Activated CD8-positive, alpha-beta T cell treated with anti-CD3 and anti-CD28 coated beads, Interleukin-2, amount 10 ng/mL, durations not matched to agents 7 days and 5 days (primary cell): ENCODE measurements at regions of chr1 and their contacts with region 1.

Region 1: DNA sequence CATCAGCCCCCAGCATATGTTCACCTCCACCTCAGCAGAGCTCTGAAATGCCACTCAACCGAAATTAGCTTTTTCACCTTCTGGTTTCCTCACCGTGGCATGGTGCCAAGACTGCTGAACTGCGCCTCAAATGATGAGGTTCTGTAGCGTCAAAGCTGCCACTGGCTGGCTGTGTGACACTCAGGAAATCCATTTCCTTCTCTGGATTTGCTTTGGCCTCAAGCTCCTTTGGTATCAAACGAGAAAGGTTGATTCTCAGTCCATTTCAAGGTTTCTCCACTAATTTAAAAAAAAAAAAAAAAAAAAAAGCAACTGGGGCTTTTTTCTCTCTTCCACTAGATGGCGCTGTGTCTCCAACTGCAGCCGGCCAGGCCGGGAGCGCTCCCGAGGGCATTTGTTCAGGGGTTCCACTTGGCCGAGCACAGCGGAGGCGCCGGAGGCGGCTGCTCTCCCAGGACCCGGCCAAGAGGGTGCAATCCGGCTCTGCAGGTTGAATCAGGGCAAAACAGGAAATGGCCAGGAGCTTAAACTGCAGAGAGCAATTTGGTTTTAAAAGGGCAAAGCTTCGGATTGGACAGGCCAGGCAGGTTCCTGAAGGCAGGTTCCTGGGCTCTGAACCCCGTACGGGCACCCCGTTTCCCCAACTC is 26.5 kb upstream of the PLA2G2C start:
- DNase-seq: peak; percentile 53
- ATAC-seq: peak; percentile 73
- H3K4me3 Mint-ChIP-seq: no peak overlapping the region
- H3K27ac Mint-ChIP-seq: no peak overlapping the region
- H3K4me1 Mint-ChIP-seq: peaks cover 6% of the 10 kb centered on the region
- H3K27me3 Mint-ChIP-seq: peaks cover 30% of the 10 kb centered on the region

Region 2: GRCh38 chr1:20178634-20179370 is 34.0 kb before region 1 on chr1:
- CTCF ChIA-PET with region 1: interaction called, 10 read pairs
- POLR2A ChIA-PET with region 1: no interaction called
- DNase-seq: no peak
- ATAC-seq: no peak
- H3K4me3 Mint-ChIP-seq: no peak overlapping the region
- H3K27ac Mint-ChIP-seq: no peak overlapping the region
- H3K4me1 Mint-ChIP-seq: peaks cover 14% of the 10 kb centered on the region
- H3K27me3 Mint-ChIP-seq: peaks cover 21% of the 10 kb centered on the region

Region 3: DNA sequence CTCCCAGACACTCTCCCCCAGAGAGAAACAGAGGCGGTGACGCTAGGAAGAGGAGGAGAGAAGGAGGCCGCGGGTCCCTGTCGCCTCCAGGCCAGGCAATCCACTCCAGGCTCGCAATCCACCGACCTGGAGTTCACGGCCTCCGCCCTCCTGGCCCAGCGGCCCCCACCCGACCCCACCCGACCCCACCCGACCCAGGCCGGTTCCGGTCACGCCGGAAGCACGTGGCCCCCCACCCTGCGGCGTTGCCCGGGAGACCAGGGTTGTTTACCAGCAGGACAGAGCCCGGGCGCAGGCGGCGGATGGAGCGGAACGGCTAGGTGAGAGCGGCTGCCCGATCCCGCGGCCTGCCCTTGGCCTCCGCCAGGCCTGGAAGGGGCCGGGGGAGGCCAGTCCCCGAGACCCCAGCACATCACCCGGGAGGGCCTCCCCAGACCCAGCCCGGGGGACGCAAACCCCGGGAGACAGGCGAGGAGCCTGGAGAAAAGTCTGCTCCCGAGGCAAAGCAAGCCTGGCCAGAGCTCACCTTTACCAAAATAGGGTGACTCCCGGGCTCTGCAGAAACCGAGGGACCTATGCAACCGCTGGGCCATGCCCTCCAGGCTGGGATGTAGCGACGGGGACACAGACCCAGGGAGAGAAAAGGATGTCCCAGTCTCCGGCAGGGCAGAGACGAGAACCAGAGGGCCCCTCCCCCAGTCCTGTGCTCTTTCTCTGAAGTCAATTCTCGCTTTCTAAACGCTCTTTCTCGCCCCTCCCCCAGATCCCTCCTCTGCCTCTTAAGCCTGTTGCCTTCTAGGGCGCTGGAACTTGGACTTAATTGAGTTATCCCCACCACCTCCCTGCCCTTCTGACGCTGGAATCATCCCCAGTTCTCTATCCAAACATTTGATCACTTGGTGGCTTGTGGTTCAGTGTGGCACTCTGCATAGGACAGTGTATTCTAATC is 26.7 kb before region 1 on chr1 and contains the starts of genes PLA2G2C and UBXN10:
- CTCF ChIA-PET with region 1: interaction called, 11 read pairs
- POLR2A ChIA-PET with region 1: no interaction called
- DNase-seq: peak; percentile 76
- ATAC-seq: peak; percentile 63
- H3K4me3 Mint-ChIP-seq: peak within 1 kb of the TSS; percentile 60
- H3K27ac Mint-ChIP-seq: peak within 1 kb of the TSS; percentile 75
- H3K4me1 Mint-ChIP-seq: peaks cover 52% of the 10 kb centered on the region
- H3K27me3 Mint-ChIP-seq: peaks cover 25% of the 10 kb centered on the region
- total RNA-seq, gene PLA2G2C: not detected
- total RNA-seq, gene UBXN10: 0.21 to 0.29 TPM

Region 4: GRCh38 chr1:20430355-20431175 is 217.8 kb after region 1 on chr1:
- CTCF ChIA-PET with region 1: interaction called, 12 read pairs
- POLR2A ChIA-PET with region 1: no interaction called
- DNase-seq: peak; percentile 46
- ATAC-seq: no peak
- H3K4me3 Mint-ChIP-seq: no peak overlapping the region
- H3K27ac Mint-ChIP-seq: no peak overlapping the region
- H3K4me1 Mint-ChIP-seq: peaks cover 8% of the 10 kb centered on the region
- H3K27me3 Mint-ChIP-seq: peaks cover 16% of the 10 kb centered on the region

Region 5: DNA sequence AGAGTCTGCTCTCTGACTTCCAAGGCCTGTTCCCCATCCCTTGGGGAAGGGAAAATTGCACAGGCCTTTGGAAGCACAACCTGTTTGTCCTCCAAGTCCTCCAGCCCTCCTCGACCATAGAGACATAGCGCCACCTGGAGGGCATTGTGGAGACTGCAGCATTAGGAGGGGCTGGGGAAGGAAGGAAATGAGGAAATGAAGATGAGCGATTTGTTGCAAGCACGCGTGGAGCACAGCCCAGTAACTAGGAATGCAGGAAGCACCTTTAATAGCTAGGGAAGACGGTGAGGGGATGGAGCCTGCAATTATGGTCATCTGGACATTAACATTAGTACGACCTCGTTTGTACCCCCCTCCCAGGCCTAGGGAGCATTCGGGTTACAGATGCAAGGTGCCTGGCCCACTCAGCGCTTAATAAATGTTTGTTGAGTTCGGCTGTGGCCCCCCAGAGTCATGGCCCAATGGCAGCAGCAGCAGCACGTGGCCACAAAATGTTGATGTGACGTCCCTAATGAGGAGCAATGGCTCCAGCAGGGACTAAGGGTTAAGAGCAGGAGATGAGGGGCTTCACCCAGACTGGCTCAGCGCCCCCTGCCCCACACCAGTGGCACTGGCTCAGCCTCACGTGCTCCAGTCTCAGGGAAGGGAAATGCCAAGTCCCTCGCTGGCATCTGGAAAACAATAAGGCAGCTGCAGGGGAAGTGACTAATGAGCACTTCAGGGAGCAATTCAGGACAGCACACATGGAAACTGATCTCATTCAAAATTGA is 281.2 kb after region 1 on chr1:
- CTCF ChIA-PET with region 1: interaction called, 61 read pairs
- POLR2A ChIA-PET with region 1: no interaction called
- DNase-seq: peak; percentile 86
- ATAC-seq: peak; percentile 69
- H3K4me3 Mint-ChIP-seq: no peak overlapping the region
- H3K27ac Mint-ChIP-seq: no peak overlapping the region
- H3K4me1 Mint-ChIP-seq: no peaks in the 10 kb centered on the region
- H3K27me3 Mint-ChIP-seq: peaks cover 12% of the 10 kb centered on the region